ENCODE measurements at regions of chr2 and their contacts with region 1.

Region 1: GRCh38 chr2:128408349-128409305 is 90.0 kb upstream of the HS6ST1 start:
- DNase-seq: peak; percentile 14
- H3K4me3 ChIP-seq: no peak overlapping the region
- H3K27ac ChIP-seq: no peak overlapping the region
- H3K4me1 ChIP-seq: peaks cover 14% of the 10 kb centered on the region
- H3K27me3 ChIP-seq: no peaks in the 10 kb centered on the region
- CTCF ChIP-seq: no peak
- POLR2A ChIP-seq: no peak

Region 2: DNA sequence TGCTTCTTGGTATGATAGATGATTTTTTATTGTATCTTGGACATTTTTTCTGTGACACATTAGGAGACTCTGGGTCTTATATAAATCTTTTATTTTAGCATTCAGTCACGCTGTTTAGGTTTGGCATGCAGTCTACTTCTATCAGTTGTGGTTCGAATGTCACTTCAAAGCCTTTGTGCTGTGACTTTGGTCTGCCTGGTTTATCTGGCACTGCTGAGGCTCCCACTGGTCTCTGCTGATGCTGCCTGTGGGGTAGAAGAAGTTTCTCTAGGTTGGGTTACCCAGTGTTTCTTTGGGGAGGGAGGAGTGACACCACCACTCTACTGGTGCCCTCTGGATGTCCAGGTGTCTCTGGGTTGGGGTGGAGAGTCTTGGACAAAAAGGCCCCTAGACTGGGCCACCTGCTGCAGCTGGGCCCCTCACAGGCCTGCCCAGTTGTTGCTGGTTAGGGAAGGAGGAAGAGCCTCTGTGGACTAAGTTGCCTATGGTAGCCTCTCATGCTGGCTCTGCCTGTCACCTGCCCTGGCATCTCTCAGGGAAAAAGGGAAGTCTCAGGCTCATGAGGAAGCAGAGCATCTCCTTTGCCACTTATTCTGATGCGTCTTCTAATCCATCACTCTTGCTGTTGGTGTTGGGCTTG is 25.4 kb after region 1 on chr2:
- CTCF ChIA-PET with region 1: no interaction called
- POLR2A ChIA-PET with region 1: no interaction called
- dilution Hi-C with region 1: no loop called
- intact Hi-C with region 1: loop called (anchors 1 kb)
- DNase-seq: no peak
- H3K4me3 ChIP-seq: no peak overlapping the region
- H3K27ac ChIP-seq: no peak overlapping the region
- H3K4me1 ChIP-seq: no peaks in the 10 kb centered on the region
- H3K27me3 ChIP-seq: peaks cover 0 to 22% of the 10 kb centered on the region in 2 experiments
- CTCF ChIP-seq: no peak
- POLR2A ChIP-seq: no peak

Measured in endothelial cell of umbilical vein (primary cell).